Endothelial cell of umbilical vein (primary cell): ENCODE measurements at regions of chr2 and their contacts with region 1.

Region 1: GRCh38 chr2:177724398-177725287 is 332.1 kb downstream of the AGPS start:
- DNase-seq: peak; percentile 89
- H3K4me3 ChIP-seq: peak overlapping the region in 1 of 3 experiments; percentile 9
- H3K27ac ChIP-seq: peak overlapping the region; percentile 62
- H3K4me1 ChIP-seq: peaks cover 13% of the 10 kb centered on the region
- H3K27me3 ChIP-seq: no peaks in the 10 kb centered on the region
- CTCF ChIP-seq: peak; percentile 84 to 94
- POLR2A ChIP-seq: no peak

Region 2: GRCh38 chr2:177419274-177419673 is 305.4 kb before region 1 on chr2:
- CTCF ChIA-PET with region 1: interaction called, 18 read pairs
- POLR2A ChIA-PET with region 1: no interaction called
- dilution Hi-C with region 1: no loop called
- intact Hi-C with region 1: loop called (anchors 1 kb)
- DNase-seq: no peak
- H3K4me3 ChIP-seq: no peak overlapping the region
- H3K27ac ChIP-seq: no peak overlapping the region
- H3K4me1 ChIP-seq: peaks cover 26% of the 10 kb centered on the region
- H3K27me3 ChIP-seq: no peaks in the 10 kb centered on the region
- CTCF ChIP-seq: no peak
- POLR2A ChIP-seq: no peak

Region 3: DNA sequence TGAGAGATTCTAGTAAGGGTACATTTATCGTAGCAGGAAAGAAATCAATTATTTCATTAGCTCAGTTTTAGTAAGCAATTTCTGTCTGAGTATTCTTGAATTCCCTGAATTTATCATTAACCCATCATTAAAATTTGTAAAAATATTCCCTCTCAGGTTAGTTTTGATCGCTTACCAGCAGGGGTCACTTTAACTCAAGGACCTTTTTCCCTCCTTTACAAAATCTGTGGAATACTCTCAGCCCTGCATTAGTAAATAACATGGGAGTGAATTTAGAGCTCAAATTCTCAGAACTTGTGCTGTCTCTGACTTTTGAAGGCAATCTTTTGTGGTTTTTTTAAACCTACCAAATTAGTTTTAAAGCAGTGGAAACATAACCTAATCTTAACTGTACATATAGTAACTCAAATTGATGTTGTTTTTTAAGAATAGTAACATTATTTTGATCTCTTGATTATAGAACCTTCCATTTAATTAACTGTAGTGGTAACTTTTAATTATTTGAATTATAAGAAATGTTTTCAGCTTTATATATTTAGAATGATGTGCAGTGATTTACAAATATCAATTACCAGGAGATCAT is 234.8 kb before region 1 on chr2:
- CTCF ChIA-PET with region 1: interaction called, 16 read pairs
- POLR2A ChIA-PET with region 1: no interaction called
- dilution Hi-C with region 1: no loop called
- intact Hi-C with region 1: loop called (anchors 1 kb)
- DNase-seq: peak; percentile 55
- H3K4me3 ChIP-seq: no peak overlapping the region
- H3K27ac ChIP-seq: no peak overlapping the region
- H3K4me1 ChIP-seq: no peaks in the 10 kb centered on the region
- H3K27me3 ChIP-seq: no peaks in the 10 kb centered on the region
- CTCF ChIP-seq: peak; percentile 42 to 45
- POLR2A ChIP-seq: no peak

Region 4: DNA sequence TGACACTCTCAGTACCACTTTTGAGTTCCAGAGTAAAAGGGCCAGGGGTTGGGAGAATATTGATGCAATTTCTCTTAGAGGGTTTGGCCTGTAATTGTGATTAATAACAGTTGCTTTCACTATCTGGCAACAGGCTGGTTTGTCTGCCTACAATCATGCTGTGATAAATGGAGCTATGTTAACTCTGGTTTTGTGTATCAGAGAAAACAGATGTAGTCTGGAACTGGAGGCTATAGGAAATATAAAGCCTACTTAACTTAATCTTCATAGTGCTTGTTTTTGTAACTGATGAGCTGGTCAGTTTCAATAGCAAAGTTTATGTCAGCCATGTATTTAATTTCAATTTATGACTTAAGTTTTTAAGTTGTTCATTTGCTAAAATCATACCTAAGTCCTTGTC is 194.1 kb before region 1 on chr2:
- CTCF ChIA-PET with region 1: no interaction called
- POLR2A ChIA-PET with region 1: no interaction called
- dilution Hi-C with region 1: no loop called
- intact Hi-C with region 1: no loop called
- DNase-seq: no peak
- H3K4me3 ChIP-seq: no peak overlapping the region
- H3K27ac ChIP-seq: no peak overlapping the region
- H3K4me1 ChIP-seq: no peaks in the 10 kb centered on the region
- H3K27me3 ChIP-seq: no peaks in the 10 kb centered on the region
- CTCF ChIP-seq: no peak
- POLR2A ChIP-seq: no peak

Region 5: GRCh38 chr2:177552422-177553175 is 172.0 kb before region 1 on chr2:
- CTCF ChIA-PET with region 1: no interaction called
- POLR2A ChIA-PET with region 1: no interaction called
- dilution Hi-C with region 1: no loop called
- intact Hi-C with region 1: loop called (anchors 5 kb)
- DNase-seq: peak; percentile 90
- H3K4me3 ChIP-seq: peak overlapping the region; percentile 57 to 93 (median 84)
- H3K27ac ChIP-seq: peak overlapping the region; percentile 91
- H3K4me1 ChIP-seq: peaks cover 41% of the 10 kb centered on the region
- H3K27me3 ChIP-seq: no peaks in the 10 kb centered on the region
- CTCF ChIP-seq: no peak
- POLR2A ChIP-seq: peak; percentile 47

Region 6: GRCh38 chr2:177604271-177605065 is 120.2 kb before region 1 on chr2:
- CTCF ChIA-PET with region 1: no interaction called
- POLR2A ChIA-PET with region 1: no interaction called
- dilution Hi-C with region 1: no loop called
- intact Hi-C with region 1: loop called (anchors 2 kb)
- DNase-seq: peak; percentile 71
- H3K4me3 ChIP-seq: no peak overlapping the region
- H3K27ac ChIP-seq: no peak overlapping the region
- H3K4me1 ChIP-seq: no peaks in the 10 kb centered on the region
- H3K27me3 ChIP-seq: no peaks in the 10 kb centered on the region
- CTCF ChIP-seq: peak; percentile 56 to 70
- POLR2A ChIP-seq: no peak

Region 7: GRCh38 chr2:177746358-177746757 is 21.7 kb after region 1 on chr2:
- CTCF ChIA-PET with region 1: interaction called, 13 read pairs
- POLR2A ChIA-PET with region 1: no interaction called
- dilution Hi-C with region 1: no loop called
- intact Hi-C with region 1: loop called (anchors 2 kb)
- DNase-seq: peak; percentile 77
- H3K4me3 ChIP-seq: no peak overlapping the region
- H3K27ac ChIP-seq: peak overlapping the region; percentile 63
- H3K4me1 ChIP-seq: peaks cover 36% of the 10 kb centered on the region
- H3K27me3 ChIP-seq: no peaks in the 10 kb centered on the region
- CTCF ChIP-seq: no peak
- POLR2A ChIP-seq: no peak

Region 8: GRCh38 chr2:177753682-177754491 is 29.2 kb after region 1 on chr2:
- CTCF ChIA-PET with region 1: interaction called, 17 read pairs
- POLR2A ChIA-PET with region 1: no interaction called
- dilution Hi-C with region 1: no loop called
- intact Hi-C with region 1: loop called (anchors 2 kb)
- DNase-seq: peak; percentile 34
- H3K4me3 ChIP-seq: no peak overlapping the region
- H3K27ac ChIP-seq: no peak overlapping the region
- H3K4me1 ChIP-seq: peaks cover 16% of the 10 kb centered on the region
- H3K27me3 ChIP-seq: no peaks in the 10 kb centered on the region
- CTCF ChIP-seq: no peak
- POLR2A ChIP-seq: no peak